Activated naive CD4-positive, alpha-beta T cell treated with anti-CD3 and anti-CD28 coated beads for 36 hours (primary cell): ENCODE measurements at regions of chr2 and their contacts with region 1.

Region 1: GRCh38 chr2:238263204-238264071 is 23.6 kb upstream of the HES6 start:
- DNase-seq: peak; percentile 89
- H3K4me3 Mint-ChIP-seq: no peak overlapping the region
- H3K27ac Mint-ChIP-seq: no peak overlapping the region
- H3K4me1 Mint-ChIP-seq: peaks cover 3% of the 10 kb centered on the region
- H3K27me3 Mint-ChIP-seq: no peaks in the 10 kb centered on the region

Region 2: DNA sequence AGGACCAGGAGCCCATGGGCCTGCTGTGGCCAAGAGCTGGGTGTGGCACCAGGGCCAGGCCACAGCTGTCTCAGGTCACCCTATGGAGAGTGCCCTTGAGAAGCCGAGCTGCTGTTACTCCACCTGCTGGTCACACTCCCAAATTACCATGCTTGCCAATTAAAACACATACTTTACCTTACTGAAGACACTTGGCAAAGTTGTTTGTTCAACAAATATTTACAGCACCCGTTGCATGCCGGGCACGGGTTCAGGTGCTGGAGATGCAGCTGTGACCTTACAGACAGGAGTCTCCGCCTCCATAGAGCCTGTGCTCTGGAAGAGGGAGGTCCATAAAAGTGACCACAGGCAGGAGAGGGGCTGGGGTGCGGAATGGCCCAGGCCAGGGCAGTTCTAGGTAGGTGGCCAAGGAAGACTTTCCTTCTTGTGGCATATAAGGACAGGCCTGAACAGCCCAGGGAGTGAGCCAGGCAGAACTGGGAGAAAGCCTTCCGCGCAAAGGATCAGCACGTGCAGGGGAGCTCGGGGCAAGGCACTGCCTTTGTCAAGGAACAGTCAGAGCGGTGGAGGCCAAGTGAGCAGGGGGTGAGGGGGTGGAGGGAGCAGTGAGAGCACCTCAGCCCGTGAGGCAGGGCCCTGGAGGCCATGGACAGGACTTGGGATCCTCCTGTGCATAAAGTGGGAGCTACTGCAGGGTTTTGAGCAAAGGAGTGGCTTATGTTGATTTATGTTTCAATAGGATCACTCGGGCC is 488.5 kb before region 1 on chr2:
- CTCF ChIA-PET with region 1: interaction called, 3 read pairs
- intact Hi-C with region 1: loop called (anchors 10 kb)
- DNase-seq: peak; percentile 70
- H3K4me3 Mint-ChIP-seq: no peak overlapping the region
- H3K27ac Mint-ChIP-seq: no peak overlapping the region
- H3K4me1 Mint-ChIP-seq: no peaks in the 10 kb centered on the region
- H3K27me3 Mint-ChIP-seq: no peaks in the 10 kb centered on the region

Region 3: GRCh38 chr2:238158527-238159070 is 104.8 kb before region 1 on chr2 and contains the start of gene ERFE:
- CTCF ChIA-PET with region 1: interaction called, 11 read pairs
- intact Hi-C with region 1: loop called (anchors 1 kb)
- DNase-seq: peak; percentile 61
- H3K4me3 Mint-ChIP-seq: peak within 1 kb of the TSS; percentile 62
- H3K27ac Mint-ChIP-seq: no peak within 1 kb of the TSS
- H3K4me1 Mint-ChIP-seq: peaks cover 7% of the 10 kb centered on the region
- H3K27me3 Mint-ChIP-seq: peaks cover 17% of the 10 kb centered on the region
- total RNA-seq, gene ERFE: 0.40 TPM in 1 of 2 experiments, not detected in the other